ENCODE measurements at regions of chr2 and their contacts with region 1.

Region 1: DNA sequence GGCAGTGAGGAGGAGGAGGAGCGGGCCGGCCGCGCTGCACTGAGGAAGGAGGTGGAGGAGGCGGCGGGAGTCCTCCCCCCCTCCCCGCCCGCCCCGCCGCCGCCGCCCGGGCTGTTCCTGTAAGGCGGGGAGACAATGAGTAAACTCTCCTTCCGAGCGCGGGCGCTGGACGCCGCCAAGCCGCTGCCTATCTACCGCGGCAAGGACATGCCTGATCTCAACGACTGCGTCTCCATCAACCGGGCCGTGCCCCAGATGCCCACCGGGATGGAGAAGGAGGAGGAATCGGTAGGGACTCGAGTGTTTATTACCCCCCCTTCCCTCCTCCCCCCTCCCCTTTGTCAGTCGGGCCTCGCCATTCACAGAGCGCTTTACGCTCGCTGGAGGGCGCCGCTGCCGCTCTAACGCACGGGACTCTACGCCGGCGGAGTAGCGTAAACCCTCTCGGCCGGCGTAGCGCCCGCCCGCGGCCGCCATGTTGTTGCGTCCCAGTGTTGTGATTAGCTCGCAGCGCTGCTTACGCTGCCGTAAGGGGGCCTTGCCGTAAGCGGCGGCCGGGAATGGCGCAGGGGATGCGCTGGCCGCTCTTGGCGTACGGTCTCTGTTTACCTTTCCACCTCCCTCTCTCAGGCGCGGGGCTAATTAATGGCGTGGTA is 460 bp downstream of the EPC2 start:
- DNase-seq: peak; percentile 88 to 100 (median 94)
- ATAC-seq: peak; percentile 67 to 70
- H3K4me3 Mint-ChIP-seq: peak overlapping the region; percentile 88 to 98 (median 94)
- H3K27ac Mint-ChIP-seq: peak overlapping the region; percentile 89 to 100 (median 97)
- H3K4me1 Mint-ChIP-seq: peaks cover 21 to 47% (median 40%) of the 10 kb centered on the region in 4 donors
- H3K27me3 Mint-ChIP-seq: peaks cover 0 to 5% (median 0%) of the 10 kb centered on the region in 5 donors

Region 2: DNA sequence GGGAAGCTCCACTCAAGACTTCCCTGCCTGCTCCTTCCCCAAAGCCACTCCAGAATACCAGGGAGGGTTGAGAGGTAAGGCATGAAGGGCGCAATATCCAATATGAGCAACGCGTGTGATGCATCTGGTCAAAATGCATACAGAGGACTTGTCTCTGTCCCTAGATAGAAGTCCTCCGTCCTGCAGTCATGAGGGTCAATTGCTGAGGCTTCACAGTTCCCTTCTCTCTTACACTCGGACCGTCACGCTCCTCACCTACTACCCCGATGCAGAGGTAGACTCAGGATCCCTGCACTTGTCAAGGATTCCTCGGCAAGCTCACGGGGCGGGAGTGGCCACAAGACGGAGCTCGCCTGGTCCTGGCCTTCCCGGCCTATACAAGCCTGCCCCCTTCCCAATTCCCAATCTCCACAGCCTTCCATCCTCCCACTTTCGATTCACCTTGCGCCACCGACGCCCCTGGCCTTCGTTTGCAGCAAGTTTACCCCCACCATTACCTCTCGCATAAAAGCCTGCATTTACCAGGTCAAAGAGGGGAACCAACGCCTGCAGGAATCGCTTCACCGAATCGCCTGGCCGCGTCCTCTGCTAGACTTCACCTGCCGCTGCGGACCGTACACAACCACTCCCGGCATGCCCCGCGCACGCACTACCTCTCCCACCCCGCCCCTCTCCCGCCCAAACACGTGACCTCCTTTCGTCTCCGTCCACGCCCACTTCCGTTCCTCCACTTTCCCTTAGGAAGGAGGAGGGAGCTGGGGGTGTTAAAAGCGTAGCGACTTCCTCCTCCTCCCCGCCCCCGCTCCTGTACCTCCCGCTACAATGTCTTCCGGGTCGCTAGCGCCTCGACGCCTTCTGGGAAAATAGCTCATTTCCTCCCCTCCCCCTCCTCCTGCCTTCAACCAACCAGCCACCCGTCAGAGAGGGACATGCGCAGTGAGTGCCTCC is 624.6 kb before region 1 on chr2 and contains the start of gene ORC4:
- POLR2A ChIA-PET with region 1: interaction called, 34 read pairs
- DNase-seq: peak; percentile 88 to 99 (median 95)
- ATAC-seq: peak; percentile 84 to 85
- H3K4me3 Mint-ChIP-seq: peak within 1 kb of the TSS; percentile 90 to 100 (median 98)
- H3K27ac Mint-ChIP-seq: peak within 1 kb of the TSS; percentile 92 to 99 (median 98)
- H3K4me1 Mint-ChIP-seq: peaks cover 34 to 82% (median 73%) of the 10 kb centered on the region in 4 donors
- H3K27me3 Mint-ChIP-seq: no peaks in the 10 kb centered on the region
- polyA plus RNA-seq, gene ORC4: 40.9 to 51.8 (median 48.8) TPM

Region 3: DNA sequence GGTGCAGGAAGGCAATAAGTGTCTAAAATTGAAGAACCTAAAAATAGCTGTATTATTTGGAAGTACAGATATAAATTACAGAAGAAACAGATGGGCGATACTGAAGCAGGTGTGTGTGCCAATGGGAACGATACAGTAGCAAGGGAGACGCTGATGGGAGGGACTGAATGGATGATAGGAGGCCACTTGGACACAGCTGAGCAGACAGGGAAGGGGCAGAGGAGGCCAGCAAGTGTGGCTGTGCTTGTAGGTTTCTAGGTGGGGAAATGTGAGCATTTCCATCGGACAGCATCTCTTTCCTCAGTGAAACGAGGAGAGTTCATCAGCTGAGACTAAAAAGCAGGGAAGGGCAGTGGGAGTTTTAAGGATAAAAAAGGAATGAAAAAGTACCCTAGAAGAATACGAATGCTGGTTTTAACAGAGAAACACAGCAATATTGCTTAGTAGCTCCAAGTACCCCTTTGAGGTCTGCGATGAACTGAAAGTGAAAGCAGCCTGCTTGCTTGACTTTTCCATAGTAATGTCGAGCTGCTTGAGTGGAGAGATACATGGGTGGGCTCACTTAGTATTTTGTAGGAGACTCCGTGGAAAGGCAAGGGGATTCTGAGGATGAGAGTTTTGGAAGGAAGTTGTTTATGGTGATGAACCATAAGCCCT is 92.2 kb before region 1 on chr2:
- POLR2A ChIA-PET with region 1: interaction called, 20 read pairs
- DNase-seq: peak in 6 of 10 donors; percentile 32 to 60 (median 42)
- ATAC-seq: peak; percentile 86 to 93
- H3K4me3 Mint-ChIP-seq: no peak overlapping the region
- H3K27ac Mint-ChIP-seq: no peak overlapping the region
- H3K4me1 Mint-ChIP-seq: peaks cover 1 to 7% (median 4%) of the 10 kb centered on the region in 4 donors
- H3K27me3 Mint-ChIP-seq: no peaks in the 10 kb centered on the region

Region 4: GRCh38 chr2:148660999-148661398 is 16.0 kb after region 1 on chr2:
- POLR2A ChIA-PET with region 1: interaction called, 17 read pairs
- DNase-seq: no peak
- ATAC-seq: no peak
- H3K4me3 Mint-ChIP-seq: peak overlapping the region in 7 of 10 donors; percentile 1 to 39 (median 14)
- H3K27ac Mint-ChIP-seq: peak overlapping the region in 4 of 10 donors; percentile 4 to 70 (median 34)
- H3K4me1 Mint-ChIP-seq: peaks cover 31 to 80% (median 76%) of the 10 kb centered on the region in 4 donors
- H3K27me3 Mint-ChIP-seq: no peaks in the 10 kb centered on the region

Region 5: DNA sequence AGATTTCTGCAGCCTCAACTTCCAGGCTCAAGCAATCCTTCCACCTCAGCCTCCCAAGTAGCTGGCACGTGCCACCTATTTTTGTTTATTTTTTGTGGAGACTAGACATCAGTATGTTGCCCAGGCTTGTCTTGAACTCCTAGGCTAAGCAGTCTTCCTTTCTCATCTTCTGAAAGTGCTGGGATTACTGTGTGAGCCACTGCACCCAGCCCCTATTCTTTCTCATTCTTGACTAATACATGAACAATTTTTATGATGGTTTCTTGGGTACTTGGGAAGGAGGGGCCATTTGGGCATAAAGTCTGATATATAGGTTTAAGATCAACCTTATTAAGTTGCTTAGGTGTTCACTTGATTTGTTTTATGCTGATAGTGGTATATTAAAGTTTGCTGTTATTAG is 25.8 kb after region 1 on chr2:
- POLR2A ChIA-PET with region 1: interaction called, 10 read pairs
- DNase-seq: no peak
- ATAC-seq: no peak
- H3K4me3 Mint-ChIP-seq: peak overlapping the region in 8 of 10 donors; percentile 24 to 75 (median 52)
- H3K27ac Mint-ChIP-seq: peak overlapping the region in 5 of 10 donors; percentile 38 to 82 (median 46)
- H3K4me1 Mint-ChIP-seq: peaks cover 52 to 91% (median 88%) of the 10 kb centered on the region in 4 donors
- H3K27me3 Mint-ChIP-seq: no peaks in the 10 kb centered on the region